Activated CD4-positive, alpha-beta T cell treated with anti-CD3 and anti-CD28 coated beads for 36 hours (primary cell): ENCODE measurements at regions of chr13 and their contacts with region 1.

Region 1: DNA sequence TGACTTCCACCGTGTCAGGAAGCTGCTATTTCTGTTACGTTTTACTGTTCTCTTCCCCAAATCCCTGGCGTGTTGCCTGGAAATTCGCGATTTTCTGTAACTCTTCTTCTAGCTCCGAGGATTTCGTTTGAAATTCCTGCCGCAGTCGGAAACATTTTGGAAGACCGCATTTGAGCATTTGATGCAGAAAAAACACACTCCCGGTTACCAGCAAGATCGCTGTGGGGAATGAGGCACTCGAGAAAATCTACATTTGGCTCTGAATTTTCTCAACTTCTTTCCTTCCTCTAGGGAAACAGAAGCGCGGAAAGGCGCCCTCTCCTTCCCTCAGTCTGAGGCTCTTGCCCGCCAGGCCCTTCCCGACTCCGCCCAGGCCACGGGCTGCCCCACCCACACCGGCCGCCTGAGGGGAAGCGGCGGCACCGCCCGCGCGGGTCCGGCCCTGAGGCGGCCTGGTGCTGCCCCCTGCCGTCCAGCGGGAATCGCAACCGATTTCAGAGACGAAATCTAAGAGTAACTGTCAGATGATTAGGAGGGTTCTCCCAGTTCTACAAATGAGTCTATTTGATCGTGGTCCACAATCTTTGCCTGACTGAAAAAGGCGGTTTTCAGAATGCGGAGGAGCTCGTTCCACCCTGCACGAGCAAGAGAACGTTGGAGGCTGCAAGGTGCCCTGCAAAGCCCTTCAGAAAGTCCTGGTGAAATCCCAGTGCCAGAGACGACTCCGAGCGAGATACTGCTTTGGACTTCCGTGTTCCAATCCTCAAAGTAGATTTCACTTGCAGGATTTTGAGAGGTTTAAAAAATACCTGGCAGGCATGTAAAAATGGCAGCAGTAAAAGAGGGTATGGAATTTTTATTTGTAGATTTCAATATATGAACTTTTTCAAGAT is 18.4 kb upstream of the TUBGCP3 start:
- DNase-seq: peak; percentile 94
- ATAC-seq: peak; percentile 100
- H3K4me3 Mint-ChIP-seq: peak overlapping the region; percentile 69
- H3K27ac Mint-ChIP-seq: peak overlapping the region; percentile 38
- H3K4me1 Mint-ChIP-seq: peaks cover 7% of the 10 kb centered on the region
- H3K27me3 Mint-ChIP-seq: peaks cover 14% of the 10 kb centered on the region

Region 2: DNA sequence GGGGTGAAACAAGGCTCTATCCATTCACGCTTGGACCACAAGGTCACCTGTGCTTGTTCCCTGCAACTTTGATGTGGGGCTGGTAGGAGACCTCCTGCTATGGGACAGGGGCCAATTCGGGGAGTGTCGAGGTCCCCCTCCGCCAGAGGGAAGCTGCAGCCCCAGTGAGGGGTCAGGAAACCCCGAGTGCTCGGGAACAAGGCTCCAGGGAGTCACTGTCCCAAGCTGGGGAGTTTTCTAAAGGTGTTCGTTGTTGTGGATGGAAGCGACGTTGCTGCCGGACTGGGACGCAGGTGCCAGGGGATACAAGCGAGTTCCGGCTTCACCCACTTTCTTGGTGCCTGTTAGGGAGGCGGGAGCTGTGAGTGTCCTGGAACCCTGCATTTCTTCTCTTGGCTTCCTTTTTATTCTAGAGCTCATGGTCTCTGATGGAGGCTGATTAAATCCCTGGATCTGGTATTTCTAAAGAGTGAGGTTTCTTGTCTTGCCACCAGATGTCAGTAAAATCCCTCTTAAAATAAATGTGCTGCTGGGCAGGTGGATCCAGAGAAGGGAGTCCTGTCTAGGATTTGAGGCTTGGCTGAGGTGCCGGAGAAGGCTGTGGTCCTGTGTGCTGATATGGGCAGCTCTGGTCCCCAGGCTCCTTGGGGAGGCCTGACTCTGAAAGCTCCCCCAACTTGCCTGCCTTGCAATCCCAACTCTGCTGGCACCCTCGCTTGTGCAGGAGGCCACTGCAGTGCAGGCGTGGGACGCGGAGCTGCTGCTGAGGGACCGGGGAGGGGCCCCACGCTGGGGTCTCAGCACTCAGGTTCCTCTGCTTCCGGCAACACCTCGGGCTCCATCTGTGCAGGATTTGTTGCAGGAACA is 1132.0 kb before region 1 on chr13:
- CTCF ChIA-PET with region 1: interaction called, 3 read pairs
- POLR2A ChIA-PET with region 1: no interaction called
- intact Hi-C with region 1: loop called in 1 of 2 experiments (anchors 10 kb)
- DNase-seq: no peak
- ATAC-seq: no peak
- H3K4me3 Mint-ChIP-seq: no peak overlapping the region
- H3K27ac Mint-ChIP-seq: no peak overlapping the region
- H3K4me1 Mint-ChIP-seq: no peaks in the 10 kb centered on the region
- H3K27me3 Mint-ChIP-seq: no peaks in the 10 kb centered on the region

Region 3: GRCh38 chr13:112443995-112444860 is 162.1 kb before region 1 on chr13:
- CTCF ChIA-PET with region 1: no interaction called
- POLR2A ChIA-PET with region 1: no interaction called
- intact Hi-C with region 1: loop called in 1 of 2 experiments (anchors 1 kb)
- DNase-seq: peak; percentile 80
- ATAC-seq: peak; percentile 80
- H3K4me3 Mint-ChIP-seq: no peak overlapping the region
- H3K27ac Mint-ChIP-seq: no peak overlapping the region
- H3K4me1 Mint-ChIP-seq: peaks cover 3% of the 10 kb centered on the region
- H3K27me3 Mint-ChIP-seq: peaks cover 29% of the 10 kb centered on the region

Region 4: GRCh38 chr13:112579310-112579843 is 27.0 kb before region 1 on chr13:
- CTCF ChIA-PET with region 1: interaction called, 13 read pairs
- POLR2A ChIA-PET with region 1: interaction called, 3 read pairs
- intact Hi-C with region 1: no loop called
- DNase-seq: no peak
- ATAC-seq: no peak
- H3K4me3 Mint-ChIP-seq: no peak overlapping the region
- H3K27ac Mint-ChIP-seq: no peak overlapping the region
- H3K4me1 Mint-ChIP-seq: peaks cover 56% of the 10 kb centered on the region
- H3K27me3 Mint-ChIP-seq: no peaks in the 10 kb centered on the region

Region 5: DNA sequence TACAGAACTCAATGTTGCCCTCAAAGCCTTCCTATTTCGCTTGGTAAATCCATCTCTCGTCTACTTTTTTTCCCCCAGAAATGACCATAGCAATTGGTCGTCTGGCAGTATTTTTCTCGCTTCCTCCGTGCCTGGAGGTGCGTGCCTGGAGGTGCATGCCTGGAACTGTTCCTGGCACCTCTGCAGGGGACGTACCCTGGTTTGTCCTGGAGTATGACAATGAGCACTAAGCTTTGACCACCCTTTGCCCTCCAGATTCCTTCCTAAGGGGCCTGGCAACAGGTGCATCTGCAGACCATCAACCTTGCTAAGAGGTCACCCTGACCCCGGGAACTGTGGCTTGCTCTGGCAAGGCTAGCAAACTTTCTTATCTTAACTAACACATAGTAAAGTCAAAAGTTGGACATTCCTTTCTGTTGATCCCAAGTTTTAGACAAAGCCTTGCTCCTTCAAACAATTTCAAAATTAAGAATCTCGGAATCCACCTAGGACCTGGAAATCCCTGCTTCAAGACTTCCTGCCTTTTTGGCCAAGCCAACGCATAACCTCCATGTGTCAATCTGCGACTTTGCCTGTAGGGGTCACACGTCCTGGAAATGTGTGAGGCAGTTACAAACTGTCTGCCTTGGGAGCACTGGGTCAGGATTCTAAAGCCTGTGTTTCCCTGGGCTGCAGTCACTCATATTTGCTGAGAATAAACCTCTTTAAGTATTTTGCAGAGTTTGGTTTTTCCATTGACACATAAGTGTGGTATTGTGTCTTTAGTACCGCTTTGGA is 10.4 kb after region 1 on chr13:
- CTCF ChIA-PET with region 1: interaction called, 19 read pairs
- POLR2A ChIA-PET with region 1: no interaction called
- intact Hi-C with region 1: no loop called
- DNase-seq: peak; percentile 51
- ATAC-seq: peak; percentile 78
- H3K4me3 Mint-ChIP-seq: no peak overlapping the region
- H3K27ac Mint-ChIP-seq: no peak overlapping the region
- H3K4me1 Mint-ChIP-seq: no peaks in the 10 kb centered on the region
- H3K27me3 Mint-ChIP-seq: peaks cover 8% of the 10 kb centered on the region

Region 6: DNA sequence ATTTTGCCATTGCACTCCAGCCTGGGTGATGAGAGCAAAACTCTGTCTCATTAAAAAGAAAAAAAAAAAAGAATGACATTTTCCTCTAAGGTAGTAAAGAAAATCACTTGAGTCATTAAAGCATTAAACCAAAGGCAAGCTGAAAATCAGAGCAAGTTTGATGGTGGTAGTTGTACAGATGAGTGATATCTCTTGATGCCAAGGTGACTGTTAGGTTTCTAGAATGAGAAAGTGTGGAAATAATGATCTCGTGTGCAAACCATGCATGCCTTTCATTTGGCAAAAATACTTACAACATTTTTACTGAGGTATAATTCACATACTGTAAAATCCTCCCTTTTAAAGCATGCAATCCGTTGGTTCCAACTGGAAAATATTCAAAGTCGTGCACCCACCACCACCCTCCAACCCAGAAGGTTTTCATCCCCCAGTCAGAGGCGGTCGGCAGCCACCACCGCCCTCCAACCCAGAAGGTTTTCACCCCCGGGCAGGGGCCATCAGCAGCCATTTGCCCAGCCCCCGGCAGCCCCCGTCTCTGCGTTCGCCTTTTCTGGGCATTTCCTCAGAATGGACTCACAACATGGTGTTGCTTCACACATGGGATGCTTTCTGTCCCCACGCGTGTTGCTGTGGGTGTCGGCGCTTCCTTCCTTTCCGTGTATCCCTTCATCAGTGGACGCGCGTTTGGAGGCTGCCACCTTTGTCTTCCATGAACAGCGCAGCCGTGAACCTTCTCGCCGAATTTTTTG is 173.7 kb after region 1 on chr13:
- CTCF ChIA-PET with region 1: no interaction called
- POLR2A ChIA-PET with region 1: no interaction called
- intact Hi-C with region 1: no loop called
- DNase-seq: no peak
- ATAC-seq: peak; percentile 55
- H3K4me3 Mint-ChIP-seq: no peak overlapping the region
- H3K27ac Mint-ChIP-seq: no peak overlapping the region
- H3K4me1 Mint-ChIP-seq: peaks cover 28% of the 10 kb centered on the region
- H3K27me3 Mint-ChIP-seq: no peaks in the 10 kb centered on the region